ENCODE measurements at regions of chr14 and their contacts with region 1.

Region 1: GRCh38 chr14:76962303-76962660 is 66.2 kb downstream of the IRF2BPL start:
- DNase-seq: no peak
- H3K4me3 Mint-ChIP-seq: peak overlapping the region; percentile 50
- H3K27ac Mint-ChIP-seq: peak overlapping the region; percentile 95
- H3K4me1 Mint-ChIP-seq: peaks cover 80% of the 10 kb centered on the region
- H3K27me3 Mint-ChIP-seq: no peaks in the 10 kb centered on the region

Region 2: GRCh38 chr14:76977793-76978720 is 15.8 kb after region 1 on chr14:
- intact Hi-C with region 1: loop called (anchors 1 kb)
- DNase-seq: peak; percentile 75
- H3K4me3 Mint-ChIP-seq: no peak overlapping the region
- H3K27ac Mint-ChIP-seq: peak overlapping the region; percentile 86
- H3K4me1 Mint-ChIP-seq: peaks cover 31% of the 10 kb centered on the region
- H3K27me3 Mint-ChIP-seq: no peaks in the 10 kb centered on the region

Measured in activated T-helper 2 cell treated with anti-CD3 and anti-CD28 coated beads, Interferon-gamma antibody, Interleukin-2, Interleukin-4, amounts not matched to agents 10 μg/mL and 5 μg/mL and 100 μg/mL, durations not matched to agents 14 hours and 24 hours and 36 hours (primary cell).